Activated CD8-positive, alpha-beta T cell treated with anti-CD3 and anti-CD28 coated beads for 36 hours (primary cell): ENCODE measurements at regions of chrX and their contacts with region 1.

Region 1: GRCh38 chrX:129726307-129727111 is 12.3 kb upstream of the XPNPEP2 start:
- DNase-seq: peak; percentile 45
- ATAC-seq: peak; percentile 27
- H3K4me3 Mint-ChIP-seq: no peak overlapping the region
- H3K27ac Mint-ChIP-seq: no peak overlapping the region
- H3K4me1 Mint-ChIP-seq: peaks cover 25% of the 10 kb centered on the region
- H3K27me3 Mint-ChIP-seq: no peaks in the 10 kb centered on the region
- CTCF ChIP-seq: peak; percentile 61

Region 2: GRCh38 chrX:129565046-129565650 is 161.4 kb before region 1 on chrX:
- CTCF ChIA-PET with region 1: no interaction called
- POLR2A ChIA-PET with region 1: no interaction called
- intact Hi-C with region 1: no loop called
- DNase-seq: no peak
- ATAC-seq: no peak
- H3K4me3 Mint-ChIP-seq: no peak overlapping the region
- H3K27ac Mint-ChIP-seq: no peak overlapping the region
- H3K4me1 Mint-ChIP-seq: peaks cover 10% of the 10 kb centered on the region
- H3K27me3 Mint-ChIP-seq: no peaks in the 10 kb centered on the region
- CTCF ChIP-seq: no peak

Region 3: GRCh38 chrX:129606918-129607317 is 119.6 kb before region 1 on chrX:
- CTCF ChIA-PET with region 1: interaction called, 8 read pairs
- POLR2A ChIA-PET with region 1: no interaction called
- intact Hi-C with region 1: loop called (anchors 5 kb)
- DNase-seq: peak; percentile 58
- ATAC-seq: peak; percentile 54
- H3K4me3 Mint-ChIP-seq: no peak overlapping the region
- H3K27ac Mint-ChIP-seq: no peak overlapping the region
- H3K4me1 Mint-ChIP-seq: peaks cover 19% of the 10 kb centered on the region
- H3K27me3 Mint-ChIP-seq: no peaks in the 10 kb centered on the region
- CTCF ChIP-seq: peak; percentile 41

Region 4: GRCh38 chrX:129637217-129638109 is 89.0 kb before region 1 on chrX:
- CTCF ChIA-PET with region 1: interaction called, 57 read pairs
- POLR2A ChIA-PET with region 1: no interaction called
- intact Hi-C with region 1: loop called (anchors 10 kb)
- DNase-seq: peak; percentile 78
- ATAC-seq: peak; percentile 87
- H3K4me3 Mint-ChIP-seq: no peak overlapping the region
- H3K27ac Mint-ChIP-seq: peak overlapping the region; percentile 42
- H3K4me1 Mint-ChIP-seq: peaks cover 2% of the 10 kb centered on the region
- H3K27me3 Mint-ChIP-seq: no peaks in the 10 kb centered on the region
- CTCF ChIP-seq: peak; percentile 76

Region 5: DNA sequence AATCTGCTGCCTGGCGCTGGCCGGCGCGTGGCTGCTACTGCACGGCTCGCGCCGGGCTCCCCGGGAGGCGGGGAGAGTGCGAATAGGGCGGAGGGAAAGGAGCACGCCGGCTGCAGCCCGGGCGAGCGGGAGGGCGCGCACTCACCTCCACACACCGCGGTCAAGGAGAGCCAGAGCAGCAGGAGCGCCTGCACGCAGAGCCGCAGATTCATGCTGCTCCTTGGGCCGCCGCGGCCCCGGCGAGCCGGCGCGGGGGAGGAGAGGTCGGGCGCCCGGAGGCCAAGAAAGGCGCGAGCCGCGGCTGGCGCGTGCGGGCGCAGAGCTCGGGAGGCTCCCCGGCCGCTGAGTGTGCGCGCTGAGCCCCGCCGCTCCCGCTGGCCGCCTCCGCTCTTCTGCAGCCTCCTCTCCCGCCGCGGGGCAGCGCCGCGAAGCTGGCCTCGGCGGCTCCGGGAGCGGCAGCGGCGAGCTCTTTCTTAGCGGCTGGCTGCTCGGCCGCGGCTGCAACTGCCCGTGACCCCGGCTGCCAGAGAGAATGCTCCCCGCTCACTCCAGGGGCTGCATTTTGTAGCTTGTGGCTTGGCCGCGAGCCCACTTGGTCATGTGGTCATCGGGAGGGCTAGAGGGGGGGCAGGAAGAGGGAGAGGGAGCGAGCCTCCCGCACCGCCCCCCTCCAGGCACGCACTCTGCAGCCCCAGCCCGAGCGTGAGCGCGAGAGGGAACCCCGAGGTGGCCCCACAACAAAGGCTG is 71.9 kb before region 1 on chrX and contains the start of gene APLN:
- CTCF ChIA-PET with region 1: interaction called, 22 read pairs
- POLR2A ChIA-PET with region 1: no interaction called
- intact Hi-C with region 1: no loop called
- DNase-seq: peak; percentile 19
- ATAC-seq: peak; percentile 73
- H3K4me3 Mint-ChIP-seq: peak within 1 kb of the TSS; percentile 66
- H3K27ac Mint-ChIP-seq: no peak within 1 kb of the TSS
- H3K4me1 Mint-ChIP-seq: peaks cover 3% of the 10 kb centered on the region
- H3K27me3 Mint-ChIP-seq: peaks cover 10% of the 10 kb centered on the region
- CTCF ChIP-seq: no peak
- total RNA-seq, gene APLN: 3.5 TPM

Region 6: DNA sequence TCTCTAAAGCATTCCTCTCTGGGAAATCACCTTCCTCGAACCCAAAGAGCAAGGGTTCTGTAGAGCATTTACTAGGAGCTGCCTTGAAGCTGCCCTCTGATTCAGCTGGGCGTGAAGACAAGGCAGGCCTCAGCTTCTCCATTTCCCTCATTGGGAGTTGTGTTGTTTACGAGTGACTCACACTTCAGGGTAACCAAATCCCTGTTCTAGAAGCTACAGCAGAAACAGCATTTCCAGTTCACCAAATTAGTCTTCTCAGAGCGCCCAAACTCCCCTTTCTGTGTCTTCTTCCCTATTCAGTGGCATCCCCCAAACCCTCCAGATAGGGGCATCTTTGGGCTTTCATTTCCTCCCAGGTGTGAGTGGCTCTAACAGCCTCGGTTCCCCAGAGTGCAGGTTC is 11.4 kb after region 1 on chrX:
- CTCF ChIA-PET with region 1: interaction called, 35 read pairs
- POLR2A ChIA-PET with region 1: no interaction called
- intact Hi-C with region 1: no loop called
- DNase-seq: no peak
- ATAC-seq: peak; percentile 25
- H3K4me3 Mint-ChIP-seq: no peak overlapping the region
- H3K27ac Mint-ChIP-seq: no peak overlapping the region
- H3K4me1 Mint-ChIP-seq: peaks cover 29% of the 10 kb centered on the region
- H3K27me3 Mint-ChIP-seq: no peaks in the 10 kb centered on the region
- CTCF ChIP-seq: no peak